GM12878 (cell line): ENCODE measurements at regions of chr1 and their contacts with region 1.

Region 1: GRCh38 chr1:59699227-59699847 is 115.4 kb upstream of the HOOK1 start:
- DNase-seq: no peak
- ATAC-seq: peak; percentile 47
- H3K4me3 ChIP-seq: no peak overlapping the region
- H3K27ac ChIP-seq: no peak overlapping the region
- H3K4me1 ChIP-seq: peaks cover 10% of the 10 kb centered on the region; the same call in 1 of the 2 replicates
- H3K27me3 ChIP-seq: no peaks in the 10 kb centered on the region
- CTCF ChIP-seq: peak; percentile 83 to 89 (median 89)
- EP300 ChIP-seq: no peak
- POLR2A ChIP-seq: no peak
- RAD21 ChIP-seq: peak; percentile 98

Region 2: GRCh38 chr1:58768191-58768731 is 931.1 kb before region 1 on chr1:
- CTCF ChIA-PET with region 1: interaction called, 10 read pairs
- POLR2A ChIA-PET with region 1: no interaction called
- RAD21 ChIA-PET with region 1: interaction called, 12 read pairs
- SMC1A ChIA-PET with region 1: interaction called, 13 read pairs
- in situ Hi-C with region 1: no loop called
- intact Hi-C with region 1: no loop called
- DNase-seq: no peak
- ATAC-seq: no peak
- H3K4me3 ChIP-seq: no peak overlapping the region
- H3K27ac ChIP-seq: no peak overlapping the region
- H3K4me1 ChIP-seq: peaks cover 3% of the 10 kb centered on the region
- H3K27me3 ChIP-seq: peaks cover 0 to 3% of the 10 kb centered on the region in 2 experiments; a peak in 2 of 4 replicates
- CTCF ChIP-seq: no peak
- EP300 ChIP-seq: no peak
- POLR2A ChIP-seq: no peak
- RAD21 ChIP-seq: no peak

Region 3: DNA sequence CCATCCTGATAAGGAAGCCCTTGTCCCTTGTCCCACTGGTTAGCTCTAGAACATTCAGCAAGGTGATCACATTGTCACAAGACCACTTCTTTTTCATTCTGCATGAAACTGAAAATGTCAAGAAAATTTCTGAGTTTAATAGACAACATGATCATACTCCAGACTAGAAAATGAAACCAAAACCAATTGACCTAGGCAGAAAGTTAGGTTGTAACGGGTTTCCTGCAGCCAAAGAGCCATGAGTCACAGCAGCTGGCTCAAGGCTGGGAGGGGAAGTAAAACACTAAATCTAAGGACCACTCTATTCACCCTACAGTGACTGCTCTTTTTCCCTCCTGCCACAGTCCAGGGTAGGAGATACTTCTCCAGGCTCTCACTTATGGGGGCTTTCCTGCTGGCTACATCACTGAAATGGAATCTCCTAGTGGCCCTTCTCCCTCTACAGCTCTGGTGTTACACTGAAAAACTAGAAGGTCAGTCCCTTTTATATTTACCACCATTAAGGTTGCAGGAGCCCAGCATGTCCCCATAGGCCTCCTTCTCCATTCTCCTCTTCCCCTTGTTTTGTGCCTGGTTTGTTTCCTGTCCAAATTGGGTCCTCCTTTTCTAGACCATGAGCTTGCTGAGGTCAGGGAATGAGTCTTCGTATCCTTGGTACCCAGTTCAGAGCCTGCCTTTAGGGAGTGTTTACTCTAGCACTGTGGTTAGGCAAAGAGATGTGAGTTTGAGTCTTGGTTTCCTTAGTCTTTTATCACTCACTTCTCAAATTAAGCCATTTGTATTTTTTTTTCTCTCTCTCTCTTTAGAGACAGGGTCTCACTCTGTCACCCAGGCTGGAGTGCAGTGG is 679.0 kb before region 1 on chr1:
- CTCF ChIA-PET with region 1: no interaction called
- POLR2A ChIA-PET with region 1: no interaction called
- RAD21 ChIA-PET with region 1: interaction called, 4 read pairs
- SMC1A ChIA-PET with region 1: interaction called, 7 read pairs
- in situ Hi-C with region 1: no loop called
- intact Hi-C with region 1: loop called (anchors 5 kb)
- DNase-seq: peak; percentile 87
- ATAC-seq: peak; percentile 93
- H3K4me3 ChIP-seq: peak overlapping the region; percentile 53; the same call in 1 of the 2 replicates
- H3K27ac ChIP-seq: peak overlapping the region; percentile 75
- H3K4me1 ChIP-seq: peaks cover 20% of the 10 kb centered on the region
- H3K27me3 ChIP-seq: no peaks in the 10 kb centered on the region
- CTCF ChIP-seq: no peak
- EP300 ChIP-seq: no peak
- POLR2A ChIP-seq: no peak
- RAD21 ChIP-seq: peak; percentile 12; the same call in 1 of the 2 replicates

Region 4: GRCh38 chr1:59290193-59290947 is 409.0 kb before region 1 on chr1:
- CTCF ChIA-PET with region 1: interaction called, 10 read pairs
- POLR2A ChIA-PET with region 1: no interaction called
- RAD21 ChIA-PET with region 1: interaction called, 10 read pairs
- SMC1A ChIA-PET with region 1: interaction called, 11 read pairs
- in situ Hi-C with region 1: loop called (anchors 5 kb)
- intact Hi-C with region 1: no loop called
- DNase-seq: no peak
- ATAC-seq: peak; percentile 90
- H3K4me3 ChIP-seq: no peak overlapping the region
- H3K27ac ChIP-seq: no peak overlapping the region
- H3K4me1 ChIP-seq: no peaks in the 10 kb centered on the region
- H3K27me3 ChIP-seq: no peaks in the 10 kb centered on the region
- CTCF ChIP-seq: peak; percentile 47 to 62 (median 50)
- EP300 ChIP-seq: no peak
- POLR2A ChIP-seq: no peak
- RAD21 ChIP-seq: peak; percentile 75

Region 5: DNA sequence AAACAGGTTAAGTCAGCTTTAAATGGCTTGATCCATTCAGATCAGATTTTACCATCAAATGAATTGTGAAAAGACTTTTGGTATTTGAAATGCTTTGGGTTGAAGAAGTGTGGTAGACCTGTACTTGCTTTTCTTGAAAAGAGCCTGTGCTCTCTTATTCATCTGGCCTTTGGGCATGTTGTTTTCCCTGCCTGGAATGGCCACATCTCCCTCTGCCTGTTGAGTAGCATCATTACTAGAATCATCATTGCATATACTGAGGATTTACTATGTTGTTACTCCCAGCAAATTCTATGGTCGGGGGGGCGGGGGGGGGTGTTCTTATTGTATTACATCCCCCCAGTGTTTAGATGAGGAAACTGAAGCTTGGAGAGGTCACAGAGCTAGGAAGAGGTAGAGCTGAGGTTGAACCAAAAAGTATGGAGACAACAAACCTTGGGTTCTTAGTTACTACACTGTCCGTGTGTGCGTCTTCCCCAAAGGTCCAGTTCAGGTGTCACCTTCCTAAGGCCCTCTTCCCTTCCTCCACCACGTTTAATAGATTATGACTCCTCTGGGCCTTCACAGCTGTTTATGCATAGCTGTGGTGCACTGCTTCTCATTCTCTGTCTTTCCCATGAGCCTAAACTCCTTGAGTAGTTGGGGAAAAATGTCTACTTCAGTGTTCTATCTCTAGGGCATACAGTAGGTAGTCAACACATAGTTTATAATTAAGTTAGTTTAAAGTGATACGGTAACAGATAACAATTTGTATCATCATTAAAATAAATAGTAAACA is 131.0 kb before region 1 on chr1:
- CTCF ChIA-PET with region 1: interaction called, 3 read pairs
- POLR2A ChIA-PET with region 1: no interaction called
- RAD21 ChIA-PET with region 1: interaction called, 3 read pairs
- SMC1A ChIA-PET with region 1: interaction called, 5 read pairs
- in situ Hi-C with region 1: no loop called
- intact Hi-C with region 1: loop called (anchors 5 kb)
- DNase-seq: no peak
- ATAC-seq: no peak
- H3K4me3 ChIP-seq: no peak overlapping the region
- H3K27ac ChIP-seq: no peak overlapping the region
- H3K4me1 ChIP-seq: peaks cover 6% of the 10 kb centered on the region
- H3K27me3 ChIP-seq: no peaks in the 10 kb centered on the region
- CTCF ChIP-seq: 0 out of 6 replicates have a peak, but pooled peaks of 1 of the 3 experiments have one; percentile 17
- EP300 ChIP-seq: no peak
- POLR2A ChIP-seq: no peak
- RAD21 ChIP-seq: peak; percentile 19; the same call in 1 of the 2 replicates

Region 6: GRCh38 chr1:59686170-59686569 is 13.2 kb before region 1 on chr1:
- CTCF ChIA-PET with region 1: interaction called, 17 read pairs
- POLR2A ChIA-PET with region 1: no interaction called
- RAD21 ChIA-PET with region 1: interaction called, 4 read pairs
- SMC1A ChIA-PET with region 1: interaction called, 16 read pairs
- in situ Hi-C with region 1: no loop called
- intact Hi-C with region 1: no loop called
- DNase-seq: no peak
- ATAC-seq: no peak
- H3K4me3 ChIP-seq: no peak overlapping the region
- H3K27ac ChIP-seq: no peak overlapping the region
- H3K4me1 ChIP-seq: no peaks in the 10 kb centered on the region
- H3K27me3 ChIP-seq: no peaks in the 10 kb centered on the region
- CTCF ChIP-seq: no peak
- EP300 ChIP-seq: no peak
- POLR2A ChIP-seq: no peak
- RAD21 ChIP-seq: no peak